CD14-positive monocyte (primary cell): ENCODE measurements at regions of chr17 and their contacts with region 1.

Region 1: GRCh38 chr17:43360739-43361505 is 37.9 kb upstream of the ARL4D start:
- DNase-seq: peak; percentile 96 to 100 (median 97)
- H3K4me3 ChIP-seq: peak overlapping the region; percentile 51 to 73 (median 67)
- H3K4me3 Mint-ChIP-seq: peak overlapping the region; percentile 86 to 93
- H3K27ac ChIP-seq: peak overlapping the region; percentile 63 to 93
- H3K27ac Mint-ChIP-seq: peak overlapping the region; percentile 99 to 100 (median 100)
- H3K4me1 ChIP-seq: peaks cover 12 to 17% of the 10 kb centered on the region in 2 donors
- H3K4me1 Mint-ChIP-seq: peaks cover 28% of the 10 kb centered on the region
- H3K27me3 ChIP-seq: no peaks in the 10 kb centered on the region
- H3K27me3 Mint-ChIP-seq: peaks cover 2 to 9% (median 2%) of the 10 kb centered on the region in 3 donors
- CTCF ChIP-seq: no peak

Region 2: DNA sequence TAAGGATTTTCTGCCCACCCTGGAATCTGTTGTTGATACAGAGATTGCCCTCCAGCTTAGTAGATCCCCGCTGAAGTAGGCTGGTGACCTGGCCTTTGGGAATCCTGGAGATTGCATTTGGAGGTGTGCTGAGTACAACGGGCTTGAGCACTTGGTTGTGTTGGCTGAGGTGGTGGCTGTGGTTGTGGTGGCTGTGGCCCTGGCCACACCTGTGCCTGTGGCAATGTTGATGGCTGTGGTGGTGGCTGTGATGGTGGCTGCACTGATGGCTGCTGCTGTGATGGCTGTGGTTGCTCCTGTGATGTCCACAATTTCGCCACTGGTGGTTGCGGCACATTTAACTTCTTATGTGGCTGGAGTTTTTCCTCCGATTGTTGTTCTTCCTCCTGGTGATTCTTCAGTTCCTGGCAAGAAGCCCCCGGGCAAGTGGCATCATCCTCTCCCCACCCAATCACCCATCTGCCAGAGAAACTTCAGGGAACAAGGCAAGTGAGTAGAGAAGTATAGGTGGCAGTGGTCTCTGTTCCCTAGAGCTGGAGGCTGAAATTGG is 136.7 kb before region 1 on chr17:
- intact Hi-C with region 1: no loop called
- DNase-seq: no peak
- H3K4me3 ChIP-seq: no peak overlapping the region
- H3K4me3 Mint-ChIP-seq: no peak overlapping the region
- H3K27ac ChIP-seq: no peak overlapping the region
- H3K27ac Mint-ChIP-seq: peak overlapping the region in 2 of 7 donors; percentile 9 to 63
- H3K4me1 ChIP-seq: no peaks in the 10 kb centered on the region
- H3K4me1 Mint-ChIP-seq: peaks cover 2% of the 10 kb centered on the region
- H3K27me3 ChIP-seq: no peaks in the 10 kb centered on the region
- H3K27me3 Mint-ChIP-seq: peaks cover 0 to 2% (median 0%) of the 10 kb centered on the region in 3 donors
- CTCF ChIP-seq: no peak

Region 3: GRCh38 chr17:43316522-43317142 is 44.3 kb before region 1 on chr17:
- intact Hi-C with region 1: loop called in 1 of 2 experiments (anchors 5 kb)
- DNase-seq: peak in 1 of 3 donors; percentile 81
- H3K4me3 ChIP-seq: no peak overlapping the region
- H3K4me3 Mint-ChIP-seq: no peak overlapping the region
- H3K27ac ChIP-seq: no peak overlapping the region
- H3K27ac Mint-ChIP-seq: peak overlapping the region in 1 of 7 donors; percentile 46
- H3K4me1 ChIP-seq: peaks cover 0 to 7% of the 10 kb centered on the region in 2 donors
- H3K4me1 Mint-ChIP-seq: peaks cover 15% of the 10 kb centered on the region
- H3K27me3 ChIP-seq: no peaks in the 10 kb centered on the region
- H3K27me3 Mint-ChIP-seq: peaks cover 1 to 6% (median 3%) of the 10 kb centered on the region in 3 donors
- CTCF ChIP-seq: no peak

Region 4: GRCh38 chr17:43388359-43389045 is 27.6 kb after region 1 on chr17:
- intact Hi-C with region 1: loop called in 1 of 2 experiments (anchors 1 kb)
- DNase-seq: peak; percentile 88 to 93 (median 93)
- H3K4me3 ChIP-seq: peak overlapping the region; percentile 77 to 83 (median 80)
- H3K4me3 Mint-ChIP-seq: peak overlapping the region; percentile 84 to 94
- H3K27ac ChIP-seq: peak overlapping the region; percentile 95 to 98
- H3K27ac Mint-ChIP-seq: peak overlapping the region; percentile 98 to 100 (median 99)
- H3K4me1 ChIP-seq: peaks cover 12 to 24% of the 10 kb centered on the region in 2 donors
- H3K4me1 Mint-ChIP-seq: peaks cover 23% of the 10 kb centered on the region
- H3K27me3 ChIP-seq: no peaks in the 10 kb centered on the region
- H3K27me3 Mint-ChIP-seq: peaks cover 0 to 5% (median 2%) of the 10 kb centered on the region in 3 donors
- CTCF ChIP-seq: no peak